Transverse colon (tissue), 4 donors: ENCODE measurements at regions of chr11 and their contacts with region 1.

Region 1: DNA sequence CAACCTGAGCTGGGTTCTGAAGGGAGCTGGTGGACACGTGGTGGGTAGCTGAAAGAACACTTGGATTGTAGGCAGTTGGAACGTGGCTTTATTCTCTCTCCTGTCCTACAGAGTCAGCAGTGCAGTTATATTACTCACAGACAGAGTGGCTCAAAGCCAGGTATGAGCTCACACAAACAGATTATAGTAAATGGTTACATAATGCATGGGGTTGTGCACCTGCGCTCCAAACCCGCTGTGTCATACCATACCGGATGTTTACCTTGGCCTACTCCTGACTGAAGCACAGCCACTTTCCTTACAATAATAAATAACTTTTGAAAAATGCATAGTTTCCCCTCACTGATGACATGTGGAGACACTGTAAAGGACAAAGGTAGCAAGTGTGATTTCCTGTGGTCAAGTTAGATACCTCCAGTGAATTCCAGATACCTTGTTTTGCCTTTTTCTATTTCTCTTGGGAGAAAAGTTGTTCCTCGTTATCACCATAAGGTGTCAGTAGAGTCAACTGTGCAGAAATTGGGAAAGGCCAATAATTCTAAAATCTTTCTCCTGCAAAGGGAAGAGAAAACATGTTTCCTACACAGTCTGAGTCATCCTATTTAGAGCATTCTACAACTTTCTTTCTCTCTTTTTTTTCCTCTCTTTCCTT is 13.5 kb downstream of the MS4A6A start:
- DNase-seq: peak; percentile 52
- H3K4me3 ChIP-seq: no peak overlapping the region
- H3K27ac ChIP-seq: peak overlapping the region in 1 of 4 donors; percentile 46
- H3K4me1 ChIP-seq: no peaks in the 10 kb centered on the region
- H3K27me3 ChIP-seq: no peaks in the 10 kb centered on the region
- CTCF ChIP-seq: peak in 4 of 5 experiments; percentile 20 to 35 (median 25)
- EP300 ChIP-seq: no peak
- POLR2A ChIP-seq: no peak

Region 2: DNA sequence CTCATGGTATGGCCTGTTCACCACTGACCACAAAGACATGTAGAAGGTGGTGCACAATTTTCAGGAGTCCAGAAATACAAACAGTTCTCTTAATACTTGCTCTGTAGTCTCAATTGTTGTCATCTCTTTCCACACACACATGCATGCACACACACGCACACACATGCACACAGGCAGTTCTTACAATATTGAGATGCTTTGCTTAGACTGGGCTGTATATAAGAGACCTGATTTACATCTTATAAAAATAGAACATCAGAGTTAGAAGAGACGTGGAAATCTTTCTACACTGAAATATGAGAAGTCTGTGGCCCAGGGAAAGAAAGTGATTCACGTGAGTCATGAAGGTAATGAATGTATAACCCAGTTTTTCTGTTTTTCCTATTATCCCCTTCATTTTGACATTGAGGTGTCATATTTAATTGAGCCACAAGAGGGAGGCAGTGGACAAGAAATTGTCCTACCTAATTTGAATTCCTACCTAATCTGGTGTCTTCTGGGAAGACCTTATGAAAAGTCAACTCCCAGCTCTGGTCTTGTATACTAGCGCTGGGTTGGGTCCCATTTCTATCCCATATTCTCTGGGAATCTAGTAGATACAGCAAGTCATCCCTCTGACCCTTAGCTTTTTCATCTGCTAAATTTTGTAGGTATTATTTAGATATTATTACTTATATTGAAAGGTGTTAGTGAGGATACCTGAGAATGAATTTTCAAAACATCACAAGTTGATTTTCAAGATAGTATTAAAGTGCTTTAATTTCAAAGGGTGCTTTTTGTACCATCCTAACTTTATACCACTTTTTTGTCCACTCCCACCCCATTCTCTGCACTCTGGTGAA is 96.2 kb after region 1 on chr11:
- in situ Hi-C with region 1: loop called in 1 of 4 experiments (anchors 25 kb)
- intact Hi-C with region 1: no loop called
- DNase-seq: no peak
- H3K4me3 ChIP-seq: no peak overlapping the region
- H3K27ac ChIP-seq: no peak overlapping the region
- H3K4me1 ChIP-seq: no peaks in the 10 kb centered on the region
- H3K27me3 ChIP-seq: no peaks in the 10 kb centered on the region
- CTCF ChIP-seq: peak; percentile 63 to 72 (median 67)
- EP300 ChIP-seq: no peak
- POLR2A ChIP-seq: no peak